Activated CD4-positive, alpha-beta T cell treated with anti-CD3 and anti-CD28 coated beads for 36 hours (primary cell): ENCODE measurements at regions of chr12 and their contacts with region 1.

Region 1: GRCh38 chr12:48750769-48751735 is 34.5 kb upstream of the CCNT1 start:
- DNase-seq: peak; percentile 37
- ATAC-seq: peak; percentile 87
- H3K4me3 Mint-ChIP-seq: peak overlapping the region; percentile 34
- H3K27ac Mint-ChIP-seq: peak overlapping the region; percentile 85
- H3K4me1 Mint-ChIP-seq: peaks cover 24% of the 10 kb centered on the region
- H3K27me3 Mint-ChIP-seq: peaks cover 5% of the 10 kb centered on the region

Region 2: GRCh38 chr12:47941851-47942601 is 809.0 kb before region 1 on chr12:
- CTCF ChIA-PET with region 1: no interaction called
- POLR2A ChIA-PET with region 1: no interaction called
- intact Hi-C with region 1: no loop called
- DNase-seq: peak; percentile 60
- ATAC-seq: peak; percentile 57
- H3K4me3 Mint-ChIP-seq: no peak overlapping the region
- H3K27ac Mint-ChIP-seq: no peak overlapping the region
- H3K4me1 Mint-ChIP-seq: peaks cover 4% of the 10 kb centered on the region
- H3K27me3 Mint-ChIP-seq: peaks cover 16% of the 10 kb centered on the region

Region 3: GRCh38 chr12:48336562-48336961 is 414.5 kb before region 1 on chr12:
- CTCF ChIA-PET with region 1: no interaction called
- POLR2A ChIA-PET with region 1: no interaction called
- intact Hi-C with region 1: no loop called
- DNase-seq: no peak
- ATAC-seq: no peak
- H3K4me3 Mint-ChIP-seq: no peak overlapping the region
- H3K27ac Mint-ChIP-seq: no peak overlapping the region
- H3K4me1 Mint-ChIP-seq: peaks cover 12% of the 10 kb centered on the region
- H3K27me3 Mint-ChIP-seq: no peaks in the 10 kb centered on the region

Region 4: DNA sequence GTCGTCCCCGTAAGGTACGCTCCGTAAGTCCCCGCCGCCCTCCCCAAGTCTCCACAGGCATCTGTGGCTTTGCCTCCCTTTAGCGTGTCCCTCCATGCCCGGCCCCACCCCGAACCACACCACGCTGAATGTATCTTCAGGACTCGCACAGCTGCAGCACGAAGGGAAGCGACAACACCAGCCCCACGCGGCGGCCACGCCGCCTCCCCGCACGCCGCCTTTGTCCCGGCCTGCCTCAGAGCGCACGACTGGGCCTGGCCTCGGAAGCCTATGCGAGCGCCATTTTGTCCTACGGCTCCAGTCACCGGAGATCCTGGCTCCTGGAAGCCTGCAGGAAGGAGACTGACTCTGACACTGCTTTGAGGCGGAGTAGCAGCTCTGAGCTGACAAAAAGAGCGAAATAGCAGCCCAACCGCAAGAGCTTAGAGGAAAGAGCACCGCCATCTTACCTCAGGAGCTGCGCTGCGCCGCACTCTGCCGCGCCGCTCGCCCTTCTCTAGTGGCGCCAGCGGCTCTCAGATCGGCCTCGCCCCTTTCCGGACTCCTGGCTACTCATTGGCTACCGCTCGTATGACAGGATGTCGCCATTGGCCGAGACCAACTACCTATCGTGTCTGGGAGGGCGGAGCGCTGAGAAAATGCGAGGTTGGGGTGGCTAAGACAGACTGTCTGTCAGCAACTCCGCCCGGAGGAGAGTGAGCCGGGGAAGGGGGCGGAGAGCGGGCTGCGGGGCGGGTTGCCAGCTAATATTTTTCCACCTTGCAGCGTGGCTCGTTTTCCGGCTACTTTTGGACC is 69.1 kb before region 1 on chr12 and contains the start of gene KANSL2:
- CTCF ChIA-PET with region 1: interaction called, 3 read pairs
- POLR2A ChIA-PET with region 1: no interaction called
- intact Hi-C with region 1: loop called in 1 of 2 experiments (anchors 1 kb)
- DNase-seq: peak; percentile 99
- ATAC-seq: peak; percentile 96
- H3K4me3 Mint-ChIP-seq: peak within 1 kb of the TSS; percentile 87
- H3K27ac Mint-ChIP-seq: peak within 1 kb of the TSS; percentile 91
- H3K4me1 Mint-ChIP-seq: peaks cover 41% of the 10 kb centered on the region
- H3K27me3 Mint-ChIP-seq: no peaks in the 10 kb centered on the region
- total RNA-seq, gene KANSL2: 44.0 to 59.8 TPM

Region 5: DNA sequence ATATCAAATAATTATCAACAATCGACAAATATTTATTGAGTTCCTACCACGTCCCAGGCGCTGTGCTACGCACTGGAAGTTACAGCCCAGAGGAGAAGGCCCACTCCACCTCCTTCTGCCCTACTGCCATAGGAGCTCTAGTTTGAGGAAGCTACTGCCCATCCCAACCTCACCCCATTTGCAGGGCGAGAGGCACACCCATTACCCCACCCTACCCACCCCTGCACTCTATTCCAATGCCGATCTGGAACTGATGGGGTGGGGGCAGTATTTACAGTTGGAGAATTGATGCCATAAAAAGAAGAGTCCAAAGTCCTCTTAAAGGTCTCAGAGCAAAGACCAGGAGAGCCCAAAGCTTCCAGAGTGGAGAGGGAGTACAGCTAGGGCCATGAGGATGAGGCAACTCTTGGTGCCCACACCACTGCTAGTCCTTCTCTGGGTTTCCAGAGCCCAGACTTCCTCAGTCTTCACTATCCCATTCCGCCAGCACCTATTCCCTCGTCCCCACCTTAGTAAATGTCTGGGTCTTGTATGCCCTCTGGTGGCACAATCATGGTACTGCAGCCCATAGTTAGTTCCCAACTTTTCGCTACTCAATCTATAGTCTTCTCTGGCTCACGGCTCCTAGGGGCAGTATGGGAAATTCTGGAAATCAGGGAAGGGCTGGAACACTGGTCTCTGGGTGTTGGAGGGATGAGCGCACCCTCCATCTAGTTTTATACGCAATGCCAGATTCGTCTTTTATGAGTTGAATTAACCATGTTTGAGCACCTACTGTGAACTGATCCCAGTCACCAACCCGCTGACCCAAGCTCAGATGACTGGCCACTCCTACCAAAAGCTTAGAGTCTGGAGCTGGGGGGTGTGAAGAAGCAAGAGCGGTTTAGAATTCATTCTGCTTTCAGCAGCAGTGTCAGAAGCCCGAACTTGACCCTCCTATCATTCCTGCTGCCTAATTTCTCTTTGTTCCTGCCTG is 44.7 kb after region 1 on chr12:
- CTCF ChIA-PET with region 1: interaction called, 116 read pairs
- POLR2A ChIA-PET with region 1: interaction called, 7 read pairs
- intact Hi-C with region 1: loop called (anchors 1 kb)
- DNase-seq: peak; percentile 74
- ATAC-seq: peak; percentile 84
- H3K4me3 Mint-ChIP-seq: no peak overlapping the region
- H3K27ac Mint-ChIP-seq: no peak overlapping the region
- H3K4me1 Mint-ChIP-seq: peaks cover 2% of the 10 kb centered on the region
- H3K27me3 Mint-ChIP-seq: peaks cover 3% of the 10 kb centered on the region

Region 6: GRCh38 chr12:48903982-48904411 is 152.9 kb after region 1 on chr12:
- CTCF ChIA-PET with region 1: interaction called, 3 read pairs
- POLR2A ChIA-PET with region 1: interaction called, 3 read pairs
- intact Hi-C with region 1: loop called in 1 of 2 experiments (anchors 5 kb)
- DNase-seq: peak; percentile 92
- ATAC-seq: peak; percentile 94
- H3K4me3 Mint-ChIP-seq: peak overlapping the region; percentile 63
- H3K27ac Mint-ChIP-seq: no peak overlapping the region
- H3K4me1 Mint-ChIP-seq: peaks cover 5% of the 10 kb centered on the region
- H3K27me3 Mint-ChIP-seq: peaks cover 3% of the 10 kb centered on the region